ENCODE measurements at regions of chr19 and their contacts with region 1.

Region 1: DNA sequence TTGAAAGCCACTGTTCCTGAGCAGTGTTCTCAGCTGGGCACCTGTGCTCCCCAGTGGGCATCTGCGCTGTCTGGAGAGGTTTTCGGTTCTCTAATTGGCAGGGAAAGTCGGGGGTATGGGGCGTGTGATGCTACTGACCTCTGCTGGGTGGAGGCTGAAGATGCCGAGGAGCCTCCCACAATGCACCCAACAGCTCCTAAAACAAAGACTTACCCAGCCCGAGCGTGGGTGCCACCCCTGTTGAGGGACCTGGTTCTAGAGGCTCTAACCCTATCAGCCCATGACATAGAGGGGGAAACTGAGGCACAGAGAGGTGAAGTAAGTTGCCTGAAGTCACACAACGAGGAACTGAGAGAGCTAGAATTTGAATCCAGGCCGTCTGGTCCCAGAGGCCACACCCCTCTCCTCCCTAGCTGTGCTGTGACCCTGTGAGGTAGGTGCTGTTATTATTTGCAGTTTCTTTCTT is 2.3 kb downstream of the SPACA4 start:
- DNase-seq: peak in 13 of 14 experiments; percentile 35 to 82 (median 54)
- ATAC-seq: peak; percentile 93
- H3K4me3 ChIP-seq: no peak overlapping the region
- H3K4me3 Mint-ChIP-seq: no peak overlapping the region
- H3K27ac ChIP-seq: no peak overlapping the region
- H3K27ac Mint-ChIP-seq: no peak overlapping the region
- H3K4me1 ChIP-seq: peaks cover 6% of the 10 kb centered on the region
- H3K4me1 Mint-ChIP-seq: peaks cover 6% of the 10 kb centered on the region
- H3K27me3 ChIP-seq: no peaks in the 10 kb centered on the region
- H3K27me3 Mint-ChIP-seq: no peaks in the 10 kb centered on the region
- CTCF ChIP-seq: peak; percentile 69

Region 2: GRCh38 chr19:48501496-48502350 is 107.1 kb before region 1 on chr19:
- CTCF ChIA-PET with region 1: interaction called, 9 read pairs
- POLR2A ChIA-PET with region 1: interaction called, 3 read pairs
- intact Hi-C with region 1: loop called (anchors 1 kb)
- DNase-seq: peak in 13 of 14 experiments; percentile 24 to 91 (median 68)
- ATAC-seq: peak; percentile 76
- H3K4me3 ChIP-seq: peak overlapping the region; percentile 34
- H3K4me3 Mint-ChIP-seq: peak overlapping the region; percentile 67
- H3K27ac ChIP-seq: peak overlapping the region in 1 of 2 donors; percentile 41
- H3K27ac Mint-ChIP-seq: no peak overlapping the region
- H3K4me1 ChIP-seq: peaks cover 43% of the 10 kb centered on the region
- H3K4me1 Mint-ChIP-seq: peaks cover 24% of the 10 kb centered on the region
- H3K27me3 ChIP-seq: peaks cover 0 to 20% of the 10 kb centered on the region in 2 experiments
- H3K27me3 Mint-ChIP-seq: peaks cover 11% of the 10 kb centered on the region
- CTCF ChIP-seq: no peak

Region 3: GRCh38 chr19:48618916-48619691 is 10.3 kb after region 1 on chr19 and contains the starts of genes RPL18 and SPHK2:
- CTCF ChIA-PET with region 1: interaction called, 5 read pairs
- POLR2A ChIA-PET with region 1: interaction called, 17 read pairs
- intact Hi-C with region 1: no loop called
- DNase-seq: peak; percentile 89 to 99 (median 95)
- ATAC-seq: peak; percentile 67
- H3K4me3 ChIP-seq: peak within 1 kb of the TSS; percentile 94
- H3K4me3 Mint-ChIP-seq: peak within 1 kb of the TSS; percentile 98
- H3K27ac ChIP-seq: peak within 1 kb of the TSS; percentile 76 to 89
- H3K27ac Mint-ChIP-seq: peak within 1 kb of the TSS; percentile 97
- H3K4me1 ChIP-seq: peaks cover 64% of the 10 kb centered on the region
- H3K4me1 Mint-ChIP-seq: peaks cover 58% of the 10 kb centered on the region
- H3K27me3 ChIP-seq: no peaks in the 10 kb centered on the region
- H3K27me3 Mint-ChIP-seq: no peaks in the 10 kb centered on the region
- CTCF ChIP-seq: no peak
- total RNA-seq, gene RPL18: 2,820 to 2,913 TPM
- total RNA-seq, gene SPHK2: 14.1 to 15.3 TPM

Measured in CD4-positive, alpha-beta T cell (primary cell).